CD4-positive, alpha-beta memory T cell (primary cell): ENCODE measurements at regions of chr2 and their contacts with region 1.

Region 1: GRCh38 chr2:237731663-237732062 is 66.9 kb upstream of the RBM44 start:
- DNase-seq: peak in 1 of 5 donors; percentile 51
- H3K4me3 ChIP-seq: no peak overlapping the region
- H3K4me3 Mint-ChIP-seq: peak overlapping the region in 7 of 8 donors; percentile 46 to 83 (median 63)
- H3K27ac ChIP-seq: peak overlapping the region; percentile 24
- H3K27ac Mint-ChIP-seq: peak overlapping the region; percentile 67 to 92 (median 85)
- H3K4me1 ChIP-seq: peaks cover 60% of the 10 kb centered on the region
- H3K4me1 Mint-ChIP-seq: peaks cover 47 to 84% (median 69%) of the 10 kb centered on the region in 4 donors
- H3K27me3 ChIP-seq: no peaks in the 10 kb centered on the region
- H3K27me3 Mint-ChIP-seq: no peaks in the 10 kb centered on the region

Region 2: GRCh38 chr2:237650455-237650850 is 81.2 kb before region 1 on chr2:
- CTCF ChIA-PET with region 1: no interaction called
- POLR2A ChIA-PET with region 1: no interaction called
- intact Hi-C with region 1: no loop called
- DNase-seq: no peak
- H3K4me3 ChIP-seq: no peak overlapping the region
- H3K4me3 Mint-ChIP-seq: no peak overlapping the region
- H3K27ac ChIP-seq: no peak overlapping the region
- H3K27ac Mint-ChIP-seq: no peak overlapping the region
- H3K4me1 ChIP-seq: no peaks in the 10 kb centered on the region
- H3K4me1 Mint-ChIP-seq: peaks cover 4 to 16% (median 6%) of the 10 kb centered on the region in 4 donors
- H3K27me3 ChIP-seq: no peaks in the 10 kb centered on the region
- H3K27me3 Mint-ChIP-seq: peaks cover 7 to 29% of the 10 kb centered on the region in 2 donors

Region 3: DNA sequence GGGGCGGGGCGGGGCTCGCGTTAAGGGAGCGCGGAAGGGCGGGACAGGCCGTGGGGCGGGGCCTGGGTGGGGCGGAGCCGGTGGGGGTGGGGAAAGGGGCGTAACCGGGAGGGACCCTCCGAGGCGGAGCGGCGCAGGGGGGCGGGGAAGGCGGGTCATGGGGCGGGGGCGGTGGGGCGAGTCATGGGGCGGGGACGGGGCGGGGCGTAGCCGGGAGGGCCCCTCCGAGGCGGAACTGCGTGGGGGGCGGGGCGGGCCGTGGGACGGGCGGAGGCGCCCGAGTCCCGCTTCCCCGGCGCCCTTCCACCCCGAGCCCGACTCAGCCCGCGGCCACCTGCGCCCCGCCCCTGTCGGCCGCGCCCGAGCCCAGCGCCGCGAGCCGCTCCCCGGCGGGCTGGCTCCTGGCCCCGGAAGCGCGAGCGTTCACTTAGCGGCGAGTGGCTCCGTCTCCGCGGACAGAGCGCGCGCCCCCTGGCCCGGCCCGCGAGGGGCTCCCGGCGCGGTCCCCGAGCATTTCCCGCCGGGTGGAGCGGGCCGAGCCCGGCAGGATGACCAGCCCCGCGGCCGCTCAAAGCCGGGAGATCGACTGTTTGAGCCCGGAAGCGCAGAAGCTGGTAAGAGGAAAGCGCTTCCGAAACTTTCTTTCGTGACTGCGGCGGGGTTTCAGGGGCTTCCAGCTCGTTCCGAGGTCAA is 39.6 kb before region 1 on chr2:
- CTCF ChIA-PET with region 1: interaction called, 7 read pairs
- POLR2A ChIA-PET with region 1: interaction called, 19 read pairs
- intact Hi-C with region 1: loop called (anchors 5 kb)
- DNase-seq: peak; percentile 91 to 94 (median 93)
- H3K4me3 ChIP-seq: peak overlapping the region; percentile 79 to 89
- H3K4me3 Mint-ChIP-seq: peak overlapping the region; percentile 90 to 97 (median 93)
- H3K27ac ChIP-seq: peak overlapping the region; percentile 96
- H3K27ac Mint-ChIP-seq: peak overlapping the region; percentile 93 to 99 (median 97)
- H3K4me1 ChIP-seq: peaks cover 76% of the 10 kb centered on the region
- H3K4me1 Mint-ChIP-seq: peaks cover 55 to 82% (median 69%) of the 10 kb centered on the region in 4 donors
- H3K27me3 ChIP-seq: no peaks in the 10 kb centered on the region
- H3K27me3 Mint-ChIP-seq: no peaks in the 10 kb centered on the region

Region 4: GRCh38 chr2:237700512-237701032 is 31.1 kb before region 1 on chr2:
- CTCF ChIA-PET with region 1: interaction called, 7 read pairs
- POLR2A ChIA-PET with region 1: interaction called, 19 read pairs
- intact Hi-C with region 1: loop called (anchors 5 kb)
- DNase-seq: peak; percentile 60 to 94 (median 66)
- H3K4me3 ChIP-seq: no peak overlapping the region
- H3K4me3 Mint-ChIP-seq: peak overlapping the region; percentile 61 to 93 (median 82)
- H3K27ac ChIP-seq: peak overlapping the region; percentile 70
- H3K27ac Mint-ChIP-seq: peak overlapping the region; percentile 90 to 96 (median 96)
- H3K4me1 ChIP-seq: peaks cover 100% of the 10 kb centered on the region
- H3K4me1 Mint-ChIP-seq: peaks cover 76 to 100% (median 93%) of the 10 kb centered on the region in 4 donors
- H3K27me3 ChIP-seq: no peaks in the 10 kb centered on the region
- H3K27me3 Mint-ChIP-seq: no peaks in the 10 kb centered on the region